Caco-2 (cell line): ENCODE measurements at regions of chr3 and their contacts with region 1.

Region 1: GRCh38 chr3:179015551-179016020 is 56.0 kb downstream of the ZMAT3 start:
- DNase-seq: peak; percentile 47 to 80
- H3K4me3 ChIP-seq: no peak overlapping the region
- H3K4me3 Mint-ChIP-seq: no peak overlapping the region
- H3K27ac Mint-ChIP-seq: no peak overlapping the region
- H3K4me1 ChIP-seq: no peaks in the 10 kb centered on the region
- H3K4me1 Mint-ChIP-seq: no peaks in the 10 kb centered on the region
- H3K27me3 ChIP-seq: no peaks in the 10 kb centered on the region
- H3K27me3 Mint-ChIP-seq: peaks cover 2% of the 10 kb centered on the region
- CTCF ChIP-seq: peak; percentile 78 to 81

Region 2: DNA sequence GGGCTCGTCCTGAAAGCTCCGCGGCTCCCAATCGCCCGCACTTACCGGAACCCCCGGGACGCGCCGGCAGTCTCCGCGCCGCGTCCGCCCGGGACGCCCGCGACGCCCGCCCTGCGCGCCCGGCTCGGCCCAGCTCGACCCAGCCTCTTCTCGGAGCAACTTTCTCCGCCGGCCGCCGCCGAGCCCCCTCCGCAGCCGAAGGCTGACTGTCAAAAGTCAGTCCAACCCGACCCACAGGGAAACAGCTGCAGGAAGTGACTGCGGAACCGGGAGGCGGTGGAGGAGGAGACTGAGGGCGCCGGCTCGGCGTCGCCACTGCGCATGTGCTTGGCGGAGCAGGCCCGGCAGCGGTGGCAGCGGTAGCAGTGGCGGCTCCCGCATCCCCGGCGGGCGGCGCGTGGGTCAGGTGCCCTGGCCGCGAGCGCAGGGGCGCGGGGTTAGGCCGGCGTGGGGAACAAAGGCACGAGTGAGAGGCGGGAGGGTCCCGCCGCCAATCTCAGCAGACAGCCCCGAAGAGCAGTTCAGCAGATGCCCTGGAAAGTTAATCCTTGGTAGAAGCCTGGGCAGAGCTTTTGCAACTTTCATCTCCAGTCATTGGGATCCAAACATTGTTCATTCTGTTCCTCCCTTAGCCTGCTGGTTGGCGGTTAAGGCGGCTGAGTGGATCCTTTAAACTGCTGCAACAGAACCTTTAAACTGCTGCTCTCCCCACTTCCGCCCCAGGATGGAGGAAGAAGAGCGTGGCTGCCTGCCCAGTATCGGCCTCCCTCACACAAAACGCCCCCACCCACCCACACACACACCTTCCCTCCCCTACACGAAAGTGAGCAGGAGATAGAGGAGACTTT is 56.2 kb after region 1 on chr3 and contains the start of gene ZMAT3:
- CTCF ChIA-PET with region 1: no interaction called
- POLR2A ChIA-PET with region 1: no interaction called
- intact Hi-C with region 1: loop called (anchors 1 kb)
- DNase-seq: peak; percentile 78 to 86
- H3K4me3 ChIP-seq: peak within 1 kb of the TSS; percentile 65
- H3K4me3 Mint-ChIP-seq: peak within 1 kb of the TSS; percentile 95
- H3K27ac Mint-ChIP-seq: no peak within 1 kb of the TSS
- H3K4me1 ChIP-seq: 0 out of 2 replicates have a peak, but pooled peaks cover 3% of the 10 kb centered on the region
- H3K4me1 Mint-ChIP-seq: no peaks in the 10 kb centered on the region
- H3K27me3 ChIP-seq: no peaks in the 10 kb centered on the region
- H3K27me3 Mint-ChIP-seq: no peaks in the 10 kb centered on the region
- CTCF ChIP-seq: no peak
- total RNA-seq, gene ZMAT3: 7.6 and 8.8 TPM in 2 replicates

Region 3: GRCh38 chr3:179098388-179099077 is 82.9 kb after region 1 on chr3:
- CTCF ChIA-PET with region 1: no interaction called
- POLR2A ChIA-PET with region 1: no interaction called
- intact Hi-C with region 1: loop called (anchors 1 kb)
- DNase-seq: no peak
- H3K4me3 ChIP-seq: no peak overlapping the region
- H3K4me3 Mint-ChIP-seq: no peak overlapping the region
- H3K27ac Mint-ChIP-seq: no peak overlapping the region
- H3K4me1 ChIP-seq: no peaks in the 10 kb centered on the region
- H3K4me1 Mint-ChIP-seq: no peaks in the 10 kb centered on the region
- H3K27me3 ChIP-seq: no peaks in the 10 kb centered on the region
- H3K27me3 Mint-ChIP-seq: peaks cover 8% of the 10 kb centered on the region
- CTCF ChIP-seq: no peak